ENCODE measurements at regions of chr2 and their contacts with region 1.

Region 1: DNA sequence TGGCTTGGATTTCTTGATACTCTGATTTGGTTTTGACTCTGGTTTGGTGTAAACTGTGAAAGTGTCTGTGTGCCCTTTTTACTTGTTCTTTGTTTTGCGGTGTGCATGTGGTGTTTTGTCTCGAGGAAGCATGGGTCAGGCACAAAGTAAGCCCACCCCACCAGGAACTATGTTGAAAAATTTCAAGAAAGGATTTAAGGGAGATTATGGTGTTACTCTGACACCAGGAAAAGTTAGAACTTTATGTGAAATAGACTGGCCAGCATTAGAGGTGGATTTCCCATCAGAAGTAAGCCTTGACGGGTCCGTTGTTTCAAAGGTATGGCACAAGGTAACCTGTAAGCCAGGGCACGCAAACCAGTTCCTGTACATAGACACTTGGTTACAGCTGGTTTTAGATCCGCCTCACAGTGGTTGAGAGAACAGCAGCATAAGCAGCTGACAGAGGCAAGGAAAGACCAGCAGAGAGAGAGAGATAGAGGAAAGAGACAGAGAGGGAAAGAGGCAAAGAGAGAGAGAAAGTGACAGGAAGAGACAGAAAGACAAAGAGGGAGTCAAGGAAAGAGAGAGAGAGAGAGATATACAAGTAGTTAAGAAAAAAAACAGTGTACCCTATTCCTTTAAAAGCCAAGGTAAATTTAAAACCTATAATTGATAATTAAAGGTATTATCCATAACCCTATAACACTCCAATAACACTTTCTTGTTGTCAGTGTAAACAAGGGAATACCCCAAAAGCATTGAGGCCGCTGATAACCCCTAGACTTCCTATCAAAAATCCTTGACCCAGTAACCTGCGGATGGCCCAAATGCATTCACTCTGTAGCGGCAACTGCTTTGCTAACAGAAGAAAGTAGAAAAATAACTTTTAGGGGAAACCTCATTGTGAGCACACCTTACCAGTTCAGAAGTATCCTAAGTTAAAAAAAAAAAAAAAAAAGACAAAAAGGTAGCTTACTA is 42.6 kb downstream of the TFPI start:
- DNase-seq: no peak
- ATAC-seq: no peak
- H3K4me3 ChIP-seq: no peak overlapping the region
- H3K27ac ChIP-seq: peak overlapping the region; percentile 20; the same call in 1 of the 2 replicates
- H3K4me1 ChIP-seq: no peaks in the 10 kb centered on the region
- H3K27me3 ChIP-seq: no peaks in the 10 kb centered on the region
- CTCF ChIP-seq: no peak

Region 2: DNA sequence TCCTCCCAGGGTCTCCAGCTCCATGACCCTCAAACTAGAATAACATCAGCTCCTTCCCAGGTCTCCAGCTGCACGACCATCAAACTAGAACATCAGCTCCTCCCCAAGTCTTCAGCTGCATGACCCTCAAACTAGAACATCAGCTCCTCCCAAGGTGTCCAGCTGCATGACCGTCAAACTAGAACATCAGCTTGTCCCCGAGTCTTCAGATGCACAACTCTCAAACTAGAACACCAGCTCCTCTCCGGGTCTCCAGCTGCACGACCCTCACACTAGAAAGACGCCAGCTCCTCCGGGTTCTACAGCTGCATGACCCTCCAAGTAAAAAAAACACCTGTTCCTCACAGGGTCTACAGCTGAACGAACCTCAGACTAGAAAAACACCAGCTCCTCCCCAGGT is 355.5 kb after region 1 on chr2:
- CTCF ChIA-PET with region 1: no interaction called
- POLR2A ChIA-PET with region 1: interaction called, 10 read pairs
- in situ Hi-C with region 1: no loop called
- intact Hi-C with region 1: no loop called
- DNase-seq: no peak
- ATAC-seq: no peak
- H3K4me3 ChIP-seq: no peak overlapping the region
- H3K27ac ChIP-seq: no peak overlapping the region
- H3K4me1 ChIP-seq: no peaks in the 10 kb centered on the region
- H3K27me3 ChIP-seq: no peaks in the 10 kb centered on the region
- CTCF ChIP-seq: no peak